Mammary epithelial cell (primary cell): ENCODE measurements at regions of chr13 and their contacts with region 1.

Region 1: GRCh38 chr13:108877300-108877699 is 247.9 kb downstream of the MYO16 start:
- DNase-seq: peak; percentile 25
- H3K4me3 ChIP-seq: no peak overlapping the region
- H3K27ac ChIP-seq: no peak overlapping the region
- H3K4me1 ChIP-seq: no peaks in the 10 kb centered on the region
- H3K27me3 ChIP-seq: no peaks in the 10 kb centered on the region
- CTCF ChIP-seq: no peak

Region 2: GRCh38 chr13:108033800-108034707 is 843.2 kb before region 1 on chr13:
- CTCF ChIA-PET with region 1: no interaction called
- dilution Hi-C with region 1: no loop called
- in situ Hi-C with region 1: no loop called
- intact Hi-C with region 1: no loop called
- DNase-seq: peak; percentile 14
- H3K4me3 ChIP-seq: no peak overlapping the region
- H3K27ac ChIP-seq: no peak overlapping the region
- H3K4me1 ChIP-seq: no peaks in the 10 kb centered on the region
- H3K27me3 ChIP-seq: peaks cover 2% of the 10 kb centered on the region
- CTCF ChIP-seq: no peak

Region 3: GRCh38 chr13:108797354-108797753 is 79.9 kb before region 1 on chr13:
- CTCF ChIA-PET with region 1: no interaction called
- dilution Hi-C with region 1: no loop called
- in situ Hi-C with region 1: no loop called
- intact Hi-C with region 1: no loop called
- DNase-seq: no peak
- H3K4me3 ChIP-seq: no peak overlapping the region
- H3K27ac ChIP-seq: no peak overlapping the region
- H3K4me1 ChIP-seq: no peaks in the 10 kb centered on the region
- H3K27me3 ChIP-seq: no peaks in the 10 kb centered on the region
- CTCF ChIP-seq: no peak

Region 4: GRCh38 chr13:108835083-108835482 is 42.2 kb before region 1 on chr13:
- CTCF ChIA-PET with region 1: no interaction called
- dilution Hi-C with region 1: loop called (anchors 5 kb)
- in situ Hi-C with region 1: no loop called
- intact Hi-C with region 1: no loop called
- DNase-seq: no peak
- H3K4me3 ChIP-seq: no peak overlapping the region
- H3K27ac ChIP-seq: no peak overlapping the region
- H3K4me1 ChIP-seq: no peaks in the 10 kb centered on the region
- H3K27me3 ChIP-seq: no peaks in the 10 kb centered on the region
- CTCF ChIP-seq: no peak

Region 5: DNA sequence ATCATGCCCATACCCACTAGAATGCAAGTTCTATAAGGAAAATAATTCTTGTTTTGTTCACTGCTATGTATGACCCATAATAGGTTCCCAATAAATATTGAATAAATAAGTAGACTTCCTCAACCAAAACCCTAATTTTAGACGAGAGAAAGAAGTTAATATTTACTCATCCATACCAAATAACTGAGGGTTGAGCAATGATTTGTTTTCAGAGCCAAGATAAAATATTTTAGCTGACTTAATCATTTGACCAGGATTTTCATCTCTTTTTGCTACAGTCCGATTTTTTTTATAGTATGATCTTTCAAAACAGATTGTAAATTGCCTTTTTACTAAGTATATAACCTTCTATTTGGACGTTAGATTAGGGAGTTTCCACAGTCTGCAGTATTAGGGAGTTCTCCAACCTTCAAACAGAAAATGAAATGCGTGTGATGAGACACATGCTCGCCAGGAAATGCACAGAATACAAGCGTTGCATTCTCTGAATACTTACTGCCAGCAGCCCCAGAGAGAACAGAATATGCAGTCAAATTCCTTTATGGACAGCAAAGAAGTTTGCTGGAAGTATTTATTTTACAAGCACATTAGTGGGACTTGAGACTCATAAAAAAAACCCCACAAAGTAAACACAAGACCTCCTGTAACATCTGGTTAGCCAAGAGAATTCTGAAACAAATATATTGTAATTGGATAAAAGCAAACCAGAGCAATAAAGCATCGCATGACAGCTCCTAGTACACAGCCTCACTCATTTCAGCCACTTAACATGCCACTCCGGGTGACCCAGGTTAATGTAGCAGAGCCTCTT is 17.9 kb before region 1 on chr13:
- CTCF ChIA-PET with region 1: no interaction called
- dilution Hi-C with region 1: no loop called
- in situ Hi-C with region 1: no loop called
- intact Hi-C with region 1: no loop called
- DNase-seq: no peak
- H3K4me3 ChIP-seq: no peak overlapping the region
- H3K27ac ChIP-seq: no peak overlapping the region
- H3K4me1 ChIP-seq: no peaks in the 10 kb centered on the region
- H3K27me3 ChIP-seq: peaks cover 2% of the 10 kb centered on the region
- CTCF ChIP-seq: no peak

Region 6: GRCh38 chr13:109233293-109233692 is 356.0 kb after region 1 on chr13:
- CTCF ChIA-PET with region 1: no interaction called
- dilution Hi-C with region 1: no loop called
- in situ Hi-C with region 1: no loop called
- intact Hi-C with region 1: no loop called
- DNase-seq: peak; percentile 45
- H3K4me3 ChIP-seq: no peak overlapping the region
- H3K27ac ChIP-seq: no peak overlapping the region
- H3K4me1 ChIP-seq: peaks cover 18% of the 10 kb centered on the region
- H3K27me3 ChIP-seq: no peaks in the 10 kb centered on the region
- CTCF ChIP-seq: no peak